Posterior cingulate gyrus (tissue), 11 donors: ENCODE measurements at regions of chr18 and their contacts with region 1.

Region 1: DNA sequence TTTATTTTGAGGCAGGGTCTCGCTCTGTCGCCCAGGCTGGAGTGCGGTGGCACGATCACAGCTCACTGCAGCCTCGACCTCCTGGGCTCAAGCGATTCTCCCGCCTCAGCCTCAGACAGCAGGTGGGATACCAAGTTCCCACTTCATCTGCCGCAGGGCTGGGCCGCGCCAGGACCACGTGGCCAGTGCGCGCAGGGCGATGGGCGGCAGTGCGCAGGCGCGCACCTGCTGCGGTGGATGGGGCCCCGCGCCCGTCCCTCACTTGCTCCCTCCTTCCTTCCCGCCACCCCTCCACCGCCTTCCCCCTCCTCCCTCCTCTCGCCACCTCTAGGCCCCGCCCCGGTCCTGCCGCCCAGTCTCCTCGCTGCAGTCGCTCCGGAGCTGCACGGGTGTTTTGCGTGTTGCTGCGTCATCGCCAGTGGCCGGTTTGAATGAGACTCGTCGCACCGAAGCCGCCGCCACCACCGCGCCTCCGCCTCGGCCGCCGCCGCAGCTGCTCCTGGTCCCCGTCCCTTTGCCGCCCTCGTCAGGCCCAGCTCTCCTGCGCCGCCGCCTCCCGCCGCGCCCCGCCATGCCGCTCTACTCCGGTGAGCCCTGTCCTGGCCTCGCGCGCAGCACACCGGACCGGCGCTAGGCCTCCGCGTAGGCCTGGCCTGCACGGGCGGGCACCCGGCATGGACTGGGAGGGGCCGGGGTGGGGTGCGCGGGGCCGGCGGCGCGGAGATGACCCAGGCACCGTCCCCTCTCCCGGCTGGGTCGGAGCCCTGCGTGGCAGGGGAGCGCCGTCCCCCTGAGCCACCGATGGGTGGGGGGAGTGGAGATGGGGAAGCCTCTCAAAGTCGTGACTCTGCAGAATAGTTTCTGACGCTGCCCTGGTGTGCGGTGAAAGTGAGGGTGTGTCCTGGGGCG is at the start of gene USP14:
- DNase-seq: peak; percentile 93 to 100 (median 98)

Region 2: DNA sequence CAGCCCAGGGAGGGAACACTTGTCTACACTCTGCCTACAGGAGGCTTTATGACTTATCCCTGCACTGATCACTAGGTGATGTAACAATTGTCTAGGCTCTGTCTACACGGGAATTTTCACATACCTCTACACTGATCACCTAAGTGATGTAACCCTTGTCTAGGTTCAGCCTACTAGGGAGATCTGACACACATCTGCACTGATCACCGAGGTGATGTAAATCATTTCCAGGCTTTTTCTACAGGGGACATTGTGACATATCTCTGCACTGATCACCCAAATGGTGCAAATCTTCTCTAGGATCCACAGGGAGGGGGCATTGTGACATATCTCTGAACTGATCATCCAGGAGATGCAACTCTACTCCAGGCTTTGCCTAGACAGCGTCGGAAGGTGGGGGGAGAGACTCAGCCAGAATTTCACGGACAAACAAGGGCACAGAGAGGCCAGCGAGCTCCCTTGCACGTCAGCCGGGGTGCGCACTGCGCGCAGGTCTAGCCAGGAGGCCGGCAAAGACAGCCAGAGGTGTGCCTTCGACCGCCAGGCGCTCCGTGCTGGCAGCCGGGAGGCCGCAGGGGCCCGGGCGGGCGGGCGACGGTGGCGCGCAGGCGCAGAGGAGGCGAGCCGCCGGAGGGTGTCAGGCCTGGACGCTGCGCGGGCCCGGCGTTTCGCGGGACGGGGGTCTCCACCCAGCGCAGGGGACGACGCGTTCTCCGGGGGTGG is 46.9 kb before region 1 on chr18:
- intact Hi-C with region 1: loop called (anchors 5 kb)
- DNase-seq: peak; percentile 38 to 94 (median 68)

Region 3: GRCh38 chr18:267688-268552 is 109.5 kb after region 1 on chr18 and contains the start of gene THOC1:
- intact Hi-C with region 1: loop called (anchors 5 kb)
- DNase-seq: peak; percentile 89 to 99 (median 94)

Region 4: GRCh38 chr18:305003-305501 is 146.7 kb after region 1 on chr18:
- intact Hi-C with region 1: no loop called
- DNase-seq: no peak